CD14-positive monocyte (primary cell): ENCODE measurements at regions of chr17 and their contacts with region 1.

Region 1: DNA sequence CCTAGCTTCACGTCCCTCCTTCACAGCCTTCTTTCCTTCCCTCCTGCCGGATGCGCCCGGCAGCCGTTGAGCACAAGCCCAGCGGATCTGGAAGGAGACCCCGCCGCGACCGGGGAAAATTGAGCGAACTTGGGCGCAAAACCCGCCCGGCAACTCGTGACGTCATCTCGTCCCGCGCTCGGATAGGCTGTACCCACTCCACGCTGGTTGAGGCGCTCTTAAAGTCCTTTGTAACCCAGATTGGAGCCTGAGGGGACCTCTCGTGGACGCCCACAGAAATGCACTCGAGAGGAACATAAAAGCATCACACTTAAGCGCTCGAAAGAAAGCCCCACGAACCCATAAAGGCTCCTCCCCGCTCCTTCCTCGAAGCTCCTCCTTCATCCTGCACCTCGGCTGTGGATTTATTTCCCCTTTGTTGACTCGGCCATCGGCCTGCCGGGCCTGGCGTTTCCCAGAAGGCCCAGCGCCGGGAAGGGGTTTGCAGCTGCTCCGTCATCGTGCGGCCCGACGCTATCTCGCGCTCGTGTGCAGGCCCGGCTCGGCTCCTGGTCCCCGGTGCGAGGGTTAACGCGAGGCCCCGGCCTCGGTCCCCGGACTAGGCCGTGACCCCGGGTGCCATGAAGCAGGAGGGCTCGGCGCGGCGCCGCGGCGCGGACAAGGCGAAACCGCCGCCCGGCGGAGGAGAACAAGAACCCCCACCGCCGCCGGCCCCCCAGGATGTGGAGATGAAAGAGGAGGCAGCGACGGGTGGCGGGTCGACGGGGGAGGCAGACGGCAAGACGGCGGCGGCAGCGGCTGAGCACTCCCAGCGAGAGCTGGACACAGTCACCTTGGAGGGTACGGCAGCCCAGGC is at the start of gene PSMD3:
- DNase-seq: peak; percentile 99
- H3K4me3 ChIP-seq: peak within 1 kb of the TSS; percentile 83 to 93 (median 89)
- H3K4me3 Mint-ChIP-seq: peak within 1 kb of the TSS; percentile 91 to 97
- H3K27ac ChIP-seq: peak within 1 kb of the TSS; percentile 82 to 94
- H3K27ac Mint-ChIP-seq: peak within 1 kb of the TSS; percentile 94 to 98 (median 96)
- H3K4me1 ChIP-seq: peaks cover 27 to 31% of the 10 kb centered on the region in 2 donors
- H3K4me1 Mint-ChIP-seq: peaks cover 25% of the 10 kb centered on the region
- H3K27me3 ChIP-seq: no peaks in the 10 kb centered on the region
- H3K27me3 Mint-ChIP-seq: peaks cover 0 to 2% (median 2%) of the 10 kb centered on the region in 3 donors
- CTCF ChIP-seq: peak; percentile 73
- polyA plus RNA-seq, gene PSMD3: 48.4 to 63.2 (median 48.8) TPM

Region 2: GRCh38 chr17:39887078-39887477 is 93.5 kb before region 1 on chr17:
- intact Hi-C with region 1: no loop called
- DNase-seq: no peak
- H3K4me3 ChIP-seq: no peak overlapping the region
- H3K4me3 Mint-ChIP-seq: no peak overlapping the region
- H3K27ac ChIP-seq: no peak overlapping the region
- H3K27ac Mint-ChIP-seq: no peak overlapping the region
- H3K4me1 ChIP-seq: peaks cover 0 to 7% of the 10 kb centered on the region in 2 donors
- H3K4me1 Mint-ChIP-seq: peaks cover 3% of the 10 kb centered on the region
- H3K27me3 ChIP-seq: peaks cover 0 to 2% of the 10 kb centered on the region in 2 donors
- H3K27me3 Mint-ChIP-seq: peaks cover 9 to 26% (median 12%) of the 10 kb centered on the region in 3 donors
- CTCF ChIP-seq: no peak

Region 3: DNA sequence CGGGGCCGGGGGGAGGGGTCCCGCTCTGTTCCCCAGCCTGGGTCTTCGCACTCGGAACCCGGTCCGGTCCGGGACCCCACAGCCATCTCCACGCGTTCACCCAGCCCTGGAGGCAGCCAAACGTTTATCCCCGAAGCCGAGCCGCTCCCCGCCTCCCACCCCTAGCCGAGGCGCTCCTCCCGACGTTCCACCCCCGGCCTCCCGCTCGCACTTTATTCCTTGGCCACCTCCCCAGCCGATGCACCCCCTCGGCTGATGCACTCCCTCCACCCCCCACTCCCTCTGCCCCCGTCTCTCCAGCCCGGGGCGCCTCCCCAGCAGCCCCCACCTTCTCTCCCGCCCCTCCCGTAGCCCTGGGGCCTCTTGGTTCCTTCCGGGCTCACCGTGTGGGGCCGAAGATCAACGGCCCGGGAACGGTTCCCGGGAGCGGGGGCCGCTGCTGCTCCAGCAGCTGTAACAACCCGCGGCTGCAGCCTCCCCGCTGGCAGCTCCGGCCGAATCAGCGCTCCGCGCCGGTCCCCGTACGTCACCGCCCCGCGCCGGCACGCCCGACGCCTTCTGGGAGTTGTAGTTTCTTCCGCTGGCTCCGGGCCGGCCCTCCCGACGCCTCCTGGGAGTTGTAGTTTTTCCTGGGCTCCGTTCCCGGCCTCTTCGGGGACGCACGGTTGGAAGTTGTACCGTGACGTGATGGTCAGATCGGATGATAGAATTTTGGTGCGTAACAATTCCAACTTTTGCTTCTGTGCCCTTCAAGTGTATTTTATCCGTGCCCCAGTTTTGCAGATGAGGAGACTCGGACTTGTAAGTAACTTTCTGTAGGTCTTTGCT is 53.3 kb before region 1 on chr17 and contains the starts of genes LRRC3C and ORMDL3:
- intact Hi-C with region 1: loop called (anchors 2 to 10 kb)
- DNase-seq: peak; percentile 87 to 89 (median 89)
- H3K4me3 ChIP-seq: peak within 1 kb of the TSS; percentile 71 to 97 (median 87)
- H3K4me3 Mint-ChIP-seq: peak within 1 kb of the TSS; percentile 92 to 99
- H3K27ac ChIP-seq: peak within 1 kb of the TSS; percentile 10 to 80
- H3K27ac Mint-ChIP-seq: peak within 1 kb of the TSS; percentile 41 to 95 (median 82)
- H3K4me1 ChIP-seq: peaks cover 38 to 57% of the 10 kb centered on the region in 2 donors
- H3K4me1 Mint-ChIP-seq: peaks cover 55% of the 10 kb centered on the region
- H3K27me3 ChIP-seq: no peaks in the 10 kb centered on the region
- H3K27me3 Mint-ChIP-seq: peaks cover 0 to 2% (median 0%) of the 10 kb centered on the region in 3 donors
- CTCF ChIP-seq: no peak
- polyA plus RNA-seq, gene LRRC3C: not detected
- polyA plus RNA-seq, gene ORMDL3: 9.4 to 13.5 (median 11.8) TPM

Region 4: DNA sequence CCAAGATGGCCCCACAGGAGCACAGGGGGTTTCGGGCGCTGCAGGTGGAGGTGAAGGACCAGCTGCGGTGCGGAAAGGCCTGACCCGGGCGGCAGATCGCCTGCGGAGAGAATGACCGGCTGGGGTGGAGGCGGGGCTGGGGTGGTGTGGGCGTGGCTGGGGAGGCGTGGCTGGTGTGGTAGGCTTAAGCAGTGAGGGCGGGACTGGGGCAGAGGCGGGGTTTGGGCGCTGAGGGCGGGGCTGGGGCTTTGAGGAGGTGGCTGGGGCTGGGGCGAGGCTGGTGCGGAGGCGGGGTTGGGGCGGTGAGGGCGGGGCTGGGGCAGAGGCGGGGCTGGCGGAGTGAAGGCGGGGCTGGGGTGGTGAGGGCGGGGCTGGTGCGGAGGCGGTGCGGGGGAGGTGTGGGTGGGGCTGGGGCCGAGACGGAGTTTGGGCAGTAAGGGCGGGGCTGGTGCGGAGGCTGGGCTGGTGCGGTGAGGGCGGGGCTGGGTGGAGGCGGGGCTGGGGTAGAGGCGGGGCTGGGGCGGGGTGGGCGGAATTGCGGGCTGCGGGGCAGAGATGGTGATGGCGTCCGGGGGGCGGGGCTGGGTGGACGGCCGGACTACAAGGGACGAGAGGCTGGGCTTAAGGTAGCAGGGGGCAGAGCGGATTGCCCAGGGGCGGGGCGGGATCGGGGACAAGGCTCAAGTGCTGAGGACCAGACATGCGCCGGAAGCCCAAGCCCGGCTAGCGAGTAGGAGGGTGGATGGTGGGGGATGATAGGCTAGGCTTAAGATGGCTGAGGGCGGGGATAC is 27.7 kb before region 1 on chr17:
- intact Hi-C with region 1: loop called in 1 of 2 experiments (anchors 2 kb)
- DNase-seq: peak; percentile 94 to 98 (median 96)
- H3K4me3 ChIP-seq: peak overlapping the region; percentile 43 to 79 (median 45)
- H3K4me3 Mint-ChIP-seq: peak overlapping the region; percentile 79 to 87
- H3K27ac ChIP-seq: peak overlapping the region; percentile 13 to 73
- H3K27ac Mint-ChIP-seq: peak overlapping the region in 6 of 7 donors; percentile 69 to 91 (median 86)
- H3K4me1 ChIP-seq: peaks cover 12 to 13% of the 10 kb centered on the region in 2 donors
- H3K4me1 Mint-ChIP-seq: peaks cover 20% of the 10 kb centered on the region
- H3K27me3 ChIP-seq: no peaks in the 10 kb centered on the region
- H3K27me3 Mint-ChIP-seq: peaks cover 5 to 16% (median 9%) of the 10 kb centered on the region in 3 donors
- CTCF ChIP-seq: no peak

Region 5: GRCh38 chr17:39963829-39964228 is 16.8 kb before region 1 on chr17:
- intact Hi-C with region 1: loop called in 1 of 2 experiments (anchors 1 kb)
- DNase-seq: no peak
- H3K4me3 ChIP-seq: no peak overlapping the region
- H3K4me3 Mint-ChIP-seq: no peak overlapping the region
- H3K27ac ChIP-seq: no peak overlapping the region
- H3K27ac Mint-ChIP-seq: no peak overlapping the region
- H3K4me1 ChIP-seq: peaks cover 32% of the 10 kb centered on the region in 2 donors
- H3K4me1 Mint-ChIP-seq: peaks cover 39% of the 10 kb centered on the region
- H3K27me3 ChIP-seq: no peaks in the 10 kb centered on the region
- H3K27me3 Mint-ChIP-seq: peaks cover 0 to 4% (median 2%) of the 10 kb centered on the region in 3 donors
- CTCF ChIP-seq: no peak